GM10248 (cell line): ENCODE measurements at regions of chr3 and their contacts with region 1.

Region 1: DNA sequence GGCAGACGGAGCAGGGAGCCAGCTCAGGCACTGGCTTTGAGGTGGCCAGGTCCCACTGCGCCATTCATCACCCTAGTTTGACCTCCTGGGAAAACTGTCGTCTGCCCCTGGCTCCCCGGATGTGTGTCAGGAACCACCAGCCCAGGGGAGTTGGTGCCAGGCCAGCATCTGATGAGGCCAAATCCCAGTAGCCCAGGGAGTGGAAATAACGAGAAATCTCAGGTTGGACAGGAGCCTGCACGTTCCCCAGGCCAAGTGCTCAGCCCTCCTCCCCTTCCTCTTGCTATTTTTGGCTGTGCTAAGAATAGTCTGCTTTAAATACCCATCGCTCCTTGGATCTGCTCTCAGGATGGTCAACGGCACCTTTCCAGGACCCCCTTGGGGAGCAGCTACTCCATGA is 93.1 kb upstream of the RPL32 start:
- DNase-seq: no peak
- CTCF ChIP-seq: no peak

Region 2: DNA sequence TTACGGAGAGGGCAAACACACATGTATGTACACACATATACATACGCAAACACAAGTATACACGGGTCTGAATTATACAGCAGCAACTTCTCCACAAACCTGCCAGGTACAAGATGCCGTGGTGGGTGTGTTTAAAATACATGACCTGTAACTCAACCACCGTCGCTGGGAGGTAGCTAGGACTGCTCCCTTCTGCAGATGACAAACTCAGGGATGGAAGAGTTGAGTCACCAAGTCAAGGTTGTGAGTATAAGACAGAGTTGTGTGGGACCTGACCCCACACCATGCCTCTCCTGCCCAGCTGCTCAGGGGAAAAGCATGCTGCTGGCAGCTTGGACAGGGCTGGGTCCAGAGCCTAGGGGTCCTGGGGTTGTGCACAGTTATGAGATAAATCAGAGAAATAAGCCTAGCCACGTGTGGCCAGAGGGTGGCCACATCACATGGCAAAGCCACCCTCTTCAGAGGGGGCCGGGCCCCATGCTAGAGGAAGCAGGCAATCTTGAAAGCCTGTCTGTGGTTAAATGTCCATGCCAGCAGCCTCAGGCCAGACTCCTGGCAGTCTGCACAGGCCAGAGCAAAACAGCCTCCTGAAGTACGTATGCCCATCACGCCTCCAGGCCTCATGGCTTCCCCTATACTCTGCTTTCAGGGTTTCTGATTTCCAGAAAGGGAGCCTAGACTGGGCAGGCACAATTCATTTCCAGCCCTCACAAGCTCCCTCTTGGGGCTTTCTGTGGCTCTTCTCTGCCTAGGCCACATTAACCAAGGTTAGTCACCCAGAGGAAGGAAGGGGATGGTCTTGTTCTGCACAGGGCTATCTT is 14.7 kb after region 1 on chr3:
- CTCF ChIA-PET with region 1: interaction called, 12 read pairs
- POLR2A ChIA-PET with region 1: no interaction called
- DNase-seq: peak; percentile 55
- CTCF ChIP-seq: no peak